ENCODE measurements at regions of chr13 and their contacts with region 1.

Region 1: DNA sequence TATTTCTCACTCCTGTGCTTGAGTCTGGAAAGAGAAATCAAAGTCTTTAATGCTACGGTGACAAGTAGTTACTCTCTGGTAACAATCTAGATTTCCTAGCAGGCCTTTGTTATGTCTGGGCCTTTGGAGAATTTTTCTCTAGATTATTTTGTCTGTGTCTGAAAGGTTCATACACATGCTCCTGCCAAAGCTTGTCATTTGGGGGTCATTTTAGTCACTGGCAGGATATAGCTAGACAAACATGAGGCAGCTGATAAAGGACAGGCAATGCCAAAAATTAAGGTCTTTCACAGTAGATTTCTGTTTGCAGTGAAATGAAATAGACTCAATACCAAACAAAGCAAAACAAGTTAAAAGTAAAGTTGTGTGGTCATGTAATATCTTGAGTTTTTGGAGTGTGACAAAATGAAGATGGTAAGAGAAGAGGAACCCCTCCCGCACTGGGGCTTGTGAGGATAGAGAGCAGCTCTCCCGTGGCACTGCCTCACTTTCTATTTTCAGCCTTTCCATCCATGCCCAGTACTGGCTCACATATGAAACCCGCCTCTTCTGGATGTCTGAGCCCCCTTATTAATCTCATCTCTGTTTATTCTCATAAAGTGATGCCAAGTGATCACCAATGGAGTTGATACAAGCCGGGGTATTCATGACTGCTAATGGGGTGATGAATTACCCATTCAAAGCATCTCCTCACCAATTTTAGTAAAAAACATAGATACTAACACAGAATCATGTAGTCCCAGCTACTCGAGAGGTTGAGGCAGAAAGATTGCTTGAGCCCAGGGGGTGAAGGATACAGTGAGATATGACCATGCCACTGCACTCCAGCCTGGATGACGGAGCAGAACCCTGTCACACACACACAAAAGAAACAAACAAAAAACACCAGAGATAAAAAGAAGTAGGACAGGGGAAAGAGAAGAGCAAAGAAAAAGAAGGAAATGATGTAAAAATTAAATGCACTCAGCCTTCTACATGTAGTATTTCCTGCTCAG is 389.3 kb downstream of the FGF14 start:
- DNase-seq: no peak

Region 2: DNA sequence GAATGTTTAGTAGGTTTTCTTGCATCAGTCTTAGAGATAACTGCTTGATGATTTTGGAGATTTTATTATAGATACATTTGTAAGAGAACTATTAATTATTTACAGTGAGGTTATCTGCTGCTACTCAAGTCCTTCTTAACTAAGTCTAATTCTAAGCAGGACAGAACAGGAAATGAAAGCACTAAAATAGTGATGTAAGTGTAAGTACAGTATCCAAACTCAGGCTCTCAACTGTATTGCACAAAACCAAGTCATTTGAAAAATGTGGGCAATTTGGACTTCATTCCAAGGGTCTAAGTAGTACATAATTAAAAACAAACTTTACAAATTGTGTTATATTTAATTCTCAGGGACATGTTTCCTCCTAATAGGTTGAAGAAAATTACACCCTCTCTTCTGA is 143.0 kb before region 1 on chr13:
- intact Hi-C with region 1: loop called (anchors 10 kb)
- DNase-seq: no peak

Region 3: DNA sequence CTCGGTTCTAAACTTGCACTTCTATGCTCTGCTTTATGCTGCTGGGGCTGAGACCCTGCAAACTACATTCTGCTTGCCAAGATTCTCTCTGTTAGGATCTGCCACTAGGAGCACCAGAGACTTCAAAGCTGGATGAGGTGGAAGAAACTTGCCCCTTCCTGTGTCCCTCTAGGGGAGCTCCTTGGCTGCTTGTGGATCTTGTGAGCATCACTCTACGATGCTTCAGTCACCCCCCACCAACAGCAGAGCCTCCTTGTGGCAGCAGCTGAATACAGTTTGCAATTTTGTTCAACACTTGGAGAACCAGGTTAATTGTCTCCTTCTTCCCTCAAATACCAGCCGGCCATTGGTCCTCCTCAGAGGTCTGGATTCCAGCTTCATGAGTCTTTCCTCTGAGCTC is 78.6 kb after region 1 on chr13:
- intact Hi-C with region 1: loop called (anchors 10 kb)
- DNase-seq: no peak

Measured in cardiac septum (tissue), 1 donor.